ENCODE measurements at regions of chr20 and their contacts with region 1.

Region 1: GRCh38 chr20:63739130-63740069 is at the start of gene SLC2A4RG:
- DNase-seq: peak; percentile 58
- ATAC-seq: peak; percentile 61
- H3K4me3 Mint-ChIP-seq: peak within 1 kb of the TSS; percentile 60
- H3K27ac Mint-ChIP-seq: no peak within 1 kb of the TSS
- H3K4me1 Mint-ChIP-seq: no peaks in the 10 kb centered on the region
- H3K27me3 Mint-ChIP-seq: no peaks in the 10 kb centered on the region
- CTCF ChIP-seq: no peak
- total RNA-seq, gene SLC2A4RG: 41.6 to 47.2 TPM (median 43.3 TPM) in 3 replicates

Region 2: GRCh38 chr20:63707549-63708300 is 31.7 kb before region 1 on chr20 and contains the starts of genes ARFRP1 and ZGPAT:
- CTCF ChIA-PET with region 1: interaction called, 10 read pairs
- POLR2A ChIA-PET with region 1: interaction called, 7 read pairs
- DNase-seq: peak; percentile 84
- ATAC-seq: peak; percentile 92
- H3K4me3 Mint-ChIP-seq: peak within 1 kb of the TSS; percentile 80
- H3K27ac Mint-ChIP-seq: peak within 1 kb of the TSS; percentile 58
- H3K4me1 Mint-ChIP-seq: peaks cover 10% of the 10 kb centered on the region
- H3K27me3 Mint-ChIP-seq: no peaks in the 10 kb centered on the region
- CTCF ChIP-seq: no peak
- total RNA-seq, gene ARFRP1: 24.3 to 30.2 TPM (median 27.4 TPM) in 3 replicates
- total RNA-seq, gene ZGPAT: 28.3 to 31.0 TPM (median 30.4 TPM) in 3 replicates

Region 3: DNA sequence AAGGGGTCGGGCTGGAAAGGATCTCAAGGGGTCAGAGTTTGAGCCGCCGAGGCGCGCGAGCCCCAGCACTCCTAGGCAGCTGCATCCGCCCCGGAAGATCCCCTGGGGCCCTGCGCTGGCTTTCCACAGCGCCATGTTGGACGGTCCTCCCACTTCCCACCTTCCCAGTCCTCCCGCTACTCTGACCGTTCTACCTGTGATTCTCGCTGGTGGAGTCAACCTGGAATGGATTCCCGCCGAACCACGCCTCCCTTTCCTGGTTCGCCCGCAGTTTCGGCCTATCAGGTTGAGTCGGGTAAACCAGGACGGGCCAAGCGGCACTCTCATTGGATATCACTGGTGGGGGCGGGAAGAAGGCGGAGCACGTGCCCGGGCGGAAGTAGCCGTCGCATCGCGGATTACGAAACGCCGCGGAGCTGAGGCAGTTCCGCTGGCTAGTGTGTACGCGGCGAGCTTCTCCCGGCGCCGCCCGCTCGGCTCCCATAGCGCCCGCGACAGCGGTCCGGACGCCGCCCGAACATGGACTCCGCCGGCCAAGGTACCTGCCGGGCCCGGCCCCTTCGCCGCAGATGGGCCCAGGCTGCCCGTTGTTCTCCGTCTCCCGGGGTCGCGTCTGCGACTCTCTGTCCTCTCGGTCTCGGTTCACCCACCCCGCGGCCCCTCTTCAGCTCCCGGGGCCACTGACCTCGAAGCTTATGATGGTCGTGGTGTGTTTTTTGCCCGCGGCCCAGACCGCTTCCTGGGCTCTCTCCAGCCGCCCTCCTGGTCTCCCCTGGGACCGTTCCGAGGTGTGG is 125.6 kb after region 1 on chr20 and contains the start of gene TPD52L2:
- CTCF ChIA-PET with region 1: interaction called, 12 read pairs
- POLR2A ChIA-PET with region 1: interaction called, 8 read pairs
- DNase-seq: peak; percentile 99
- ATAC-seq: peak; percentile 94
- H3K4me3 Mint-ChIP-seq: peak within 1 kb of the TSS; percentile 94
- H3K27ac Mint-ChIP-seq: peak within 1 kb of the TSS; percentile 87
- H3K4me1 Mint-ChIP-seq: peaks cover 27% of the 10 kb centered on the region
- H3K27me3 Mint-ChIP-seq: no peaks in the 10 kb centered on the region
- CTCF ChIP-seq: no peak
- total RNA-seq, gene TPD52L2: 80.8 to 87.2 TPM (median 85.6 TPM) in 3 replicates